MCF 10A (cell line): ENCODE measurements at regions of chr16 and their contacts with region 1.

Region 1: GRCh38 chr16:19108409-19109287 is 5.1 kb upstream of the ITPRIPL2 start:
- DNase-seq: no peak
- H3K4me3 Mint-ChIP-seq: no peak overlapping the region
- H3K27ac Mint-ChIP-seq: peak overlapping the region; percentile 77
- H3K4me1 Mint-ChIP-seq: peaks cover 14% of the 10 kb centered on the region
- H3K27me3 Mint-ChIP-seq: no peaks in the 10 kb centered on the region
- CTCF ChIP-seq: no peak

Region 2: GRCh38 chr16:19138601-19139000 is 30.0 kb after region 1 on chr16:
- CTCF ChIA-PET with region 1: interaction called, 9 read pairs
- POLR2A ChIA-PET with region 1: interaction called, 298 read pairs
- intact Hi-C with region 1: loop called (anchors 1 kb)
- DNase-seq: peak; percentile 99
- H3K4me3 Mint-ChIP-seq: peak overlapping the region; percentile 24
- H3K27ac Mint-ChIP-seq: peak overlapping the region; percentile 44
- H3K4me1 Mint-ChIP-seq: peaks cover 61% of the 10 kb centered on the region
- H3K27me3 Mint-ChIP-seq: no peaks in the 10 kb centered on the region
- CTCF ChIP-seq: no peak